ENCODE measurements at regions of chr20 and their contacts with region 1.

Region 1: DNA sequence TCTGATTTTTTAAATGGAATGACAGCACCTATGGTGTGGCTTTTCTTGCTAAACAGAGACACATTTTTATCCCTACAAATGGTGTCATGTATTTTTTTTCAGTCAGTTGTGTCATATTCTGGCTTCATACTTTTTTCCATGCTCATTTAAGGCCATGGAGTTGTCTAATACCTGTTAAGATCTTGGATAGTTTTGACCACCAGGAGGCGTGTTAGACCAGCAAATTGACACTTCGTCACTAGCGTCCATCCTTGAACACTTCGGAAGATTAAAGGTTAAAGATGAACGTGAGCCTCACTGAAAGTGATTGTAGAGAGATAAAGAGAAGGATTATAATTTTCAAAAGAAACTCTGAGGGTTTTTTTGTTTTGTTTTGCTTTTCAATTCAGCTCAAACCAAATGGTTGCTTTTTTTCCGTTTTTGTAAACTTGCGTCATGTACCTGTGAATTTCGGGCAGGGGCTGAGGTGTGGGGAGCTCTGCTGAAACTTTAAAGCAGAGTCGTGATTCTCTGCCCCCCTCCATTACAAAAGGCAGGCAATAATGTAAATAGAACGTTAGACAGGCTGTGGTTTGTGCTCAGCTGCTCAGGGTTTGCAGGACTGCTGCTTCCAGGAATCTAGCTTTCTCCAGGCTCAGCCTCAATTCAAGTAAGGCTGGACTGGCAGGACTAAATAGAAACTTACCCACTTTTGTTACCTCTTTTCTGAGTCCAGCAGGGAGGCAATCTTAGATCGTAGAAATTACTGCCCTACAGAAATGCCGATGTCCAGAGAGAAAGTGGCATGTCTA is 245.1 kb downstream of the FOXA2 start:
- DNase-seq: peak; percentile 37
- CTCF ChIP-seq: peak; percentile 74

Region 2: DNA sequence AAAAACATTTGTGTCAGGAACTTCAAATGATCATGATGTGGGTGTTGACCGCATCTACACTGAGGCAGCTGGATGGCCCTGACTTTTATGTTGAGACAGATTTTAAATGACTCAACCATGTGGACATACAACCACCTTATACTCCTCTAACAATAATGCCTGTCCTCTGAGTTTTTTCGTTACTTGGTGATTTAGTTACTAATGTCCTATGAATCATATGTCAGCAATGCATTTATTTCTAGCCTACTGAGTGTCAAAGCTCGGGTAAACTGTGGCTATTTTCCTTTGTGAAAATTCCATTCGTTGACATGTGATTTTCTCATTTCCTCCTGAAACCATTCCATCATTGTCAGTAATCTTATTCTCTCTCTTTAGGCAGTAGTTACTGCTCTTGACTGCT is 903.1 kb before region 1 on chr20:
- CTCF ChIA-PET with region 1: no interaction called
- POLR2A ChIA-PET with region 1: no interaction called
- DNase-seq: no peak
- CTCF ChIP-seq: no peak

Region 3: GRCh38 chr20:22578221-22579118 is 239.2 kb after region 1 on chr20:
- CTCF ChIA-PET with region 1: no interaction called
- POLR2A ChIA-PET with region 1: no interaction called
- DNase-seq: no peak
- CTCF ChIP-seq: no peak

Region 4: DNA sequence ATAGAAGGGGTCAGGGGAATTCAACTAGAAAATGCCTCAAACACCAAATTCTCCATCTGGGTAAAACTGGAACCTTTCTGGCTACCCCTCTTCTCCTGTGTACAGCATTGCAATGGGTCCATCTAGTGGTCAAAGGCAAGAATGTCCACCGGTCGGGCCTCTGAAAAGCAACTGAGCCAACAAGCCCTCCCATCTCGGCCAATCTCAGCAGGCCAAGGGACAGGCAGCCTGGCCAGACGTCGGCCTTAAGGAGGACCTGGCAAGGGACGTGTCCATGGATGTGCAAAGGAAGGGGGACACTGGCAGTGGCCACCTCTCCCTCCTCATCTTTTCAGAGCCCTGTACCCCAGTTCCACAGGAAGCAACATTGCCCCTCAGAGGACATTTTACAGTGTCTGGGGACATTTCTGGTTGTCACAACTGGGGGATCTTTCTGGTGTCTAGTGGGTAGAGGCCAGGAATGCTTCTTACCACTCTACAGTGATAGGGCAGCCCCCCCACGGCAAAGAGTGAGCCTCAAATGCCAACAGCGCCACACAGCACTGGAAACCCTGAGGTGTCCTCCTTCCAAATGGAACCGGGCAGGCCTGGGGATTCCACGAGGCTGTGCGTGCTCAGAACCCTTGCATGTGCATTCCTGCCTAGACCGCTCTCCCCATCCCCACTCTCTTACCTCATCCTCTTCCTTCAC is 344.9 kb after region 1 on chr20:
- CTCF ChIA-PET with region 1: interaction called, 77 read pairs
- POLR2A ChIA-PET with region 1: no interaction called
- DNase-seq: peak; percentile 70
- CTCF ChIP-seq: peak; percentile 77